Lower leg skin (tissue), 4 donors: ENCODE measurements at regions of chr1 and their contacts with region 1.

Region 1: GRCh38 chr1:100921109-100921706 is 25.3 kb downstream of the SLC30A7 start:
- DNase-seq: no peak
- H3K4me3 ChIP-seq: no peak overlapping the region
- CTCF ChIP-seq: no peak
- POLR2A ChIP-seq: no peak

Region 2: DNA sequence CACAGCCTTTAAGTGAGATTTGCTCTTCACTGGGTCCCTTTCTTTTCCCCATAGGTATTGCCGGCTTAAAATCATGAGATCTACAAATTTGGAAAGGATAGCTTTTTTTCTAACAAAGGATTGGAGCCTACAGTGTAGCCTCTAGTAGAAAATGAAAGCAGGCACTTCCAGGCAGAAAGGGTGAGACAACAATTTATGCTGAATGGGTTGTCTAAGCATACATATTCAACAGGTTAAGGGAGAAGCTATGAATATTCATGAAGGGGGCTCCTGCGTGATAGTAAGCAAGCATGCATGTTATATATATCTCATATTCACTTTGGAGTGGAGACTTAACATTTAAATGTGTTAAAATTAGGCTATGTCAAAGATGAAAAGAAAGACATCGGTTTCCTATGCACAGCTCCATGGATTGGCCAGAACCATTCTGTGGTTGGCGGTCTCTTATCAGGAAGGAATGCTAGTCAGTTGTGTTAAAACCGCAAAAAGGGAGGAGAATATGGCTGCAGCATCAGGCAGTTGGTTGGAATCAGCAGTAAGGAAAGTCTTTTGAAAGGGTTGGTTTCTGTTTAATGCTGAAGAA is 135.6 kb before region 1 on chr1:
- intact Hi-C with region 1: no loop called
- DNase-seq: no peak
- H3K4me3 ChIP-seq: no peak overlapping the region
- CTCF ChIP-seq: no peak
- POLR2A ChIP-seq: no peak

Region 3: GRCh38 chr1:101257500-101258325 is 336.5 kb after region 1 on chr1:
- intact Hi-C with region 1: loop called (anchors 10 kb)
- DNase-seq: peak in 1 of 2 donors; percentile 35
- H3K4me3 ChIP-seq: no peak overlapping the region
- CTCF ChIP-seq: no peak
- POLR2A ChIP-seq: no peak

Region 4: DNA sequence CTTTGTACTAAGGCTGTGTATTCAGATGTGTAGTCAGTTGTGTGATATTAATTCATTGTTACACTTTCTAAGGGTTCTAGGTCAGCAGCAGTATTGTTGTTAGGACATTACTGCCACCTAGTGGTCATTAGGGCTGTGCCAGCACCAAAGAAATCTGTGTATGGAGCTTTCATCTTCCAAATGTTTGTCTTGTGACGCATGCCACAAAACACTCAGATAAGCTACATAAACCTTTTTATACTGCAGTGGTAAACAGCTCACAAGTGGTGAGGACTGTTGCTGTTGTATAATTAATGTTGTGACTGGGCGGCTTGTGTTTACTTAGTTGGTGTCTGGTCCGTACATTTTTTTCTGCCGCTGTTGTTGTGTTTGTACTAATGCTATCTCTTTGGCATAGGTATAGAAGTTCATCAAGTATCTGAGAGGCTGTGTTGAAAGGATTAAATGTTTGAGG is 367.3 kb after region 1 on chr1:
- intact Hi-C with region 1: loop called (anchors 10 kb)
- DNase-seq: peak in 1 of 2 donors; percentile 56
- H3K4me3 ChIP-seq: no peak overlapping the region
- CTCF ChIP-seq: peak in 1 of 3 donors; percentile 38
- POLR2A ChIP-seq: no peak